ENCODE measurements at regions of chr2 and their contacts with region 1.

Region 1: DNA sequence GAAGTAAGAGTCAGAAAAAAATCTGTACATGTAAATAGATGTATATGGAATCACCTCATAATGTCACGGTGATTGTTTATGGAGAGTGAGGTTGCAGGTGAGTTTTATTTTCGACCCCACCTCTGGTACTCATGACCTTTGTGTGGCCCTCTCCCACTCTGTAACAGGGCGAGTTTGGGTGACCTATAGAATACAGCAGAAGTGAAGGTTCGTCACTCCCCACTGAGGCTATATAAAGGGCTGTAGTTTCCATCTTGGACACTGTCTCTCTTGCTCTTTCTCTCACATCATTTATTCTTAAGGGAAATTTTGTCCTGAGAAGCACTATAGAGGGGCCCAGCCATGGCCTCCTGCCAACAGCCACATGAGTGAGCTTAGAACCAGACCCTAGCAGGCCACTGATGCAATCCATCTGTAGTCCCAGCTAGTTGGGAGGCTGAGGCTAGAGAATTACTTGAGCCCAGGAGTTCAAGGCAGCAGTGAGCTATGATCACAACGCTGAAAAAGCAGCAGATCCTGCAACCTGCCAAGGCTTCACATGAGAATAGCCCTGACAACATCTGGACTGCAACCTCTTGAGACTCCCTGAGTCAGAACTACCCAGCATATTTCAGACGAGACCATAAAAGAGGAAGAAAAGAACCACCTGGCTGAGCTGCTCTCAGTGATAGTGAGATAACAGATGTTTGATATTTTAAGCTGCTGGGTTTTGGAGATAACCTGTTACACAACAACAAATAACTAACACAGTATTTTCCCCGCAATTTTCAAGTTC is 74.3 kb upstream of the SLC1A4 start:
- DNase-seq: no peak
- ATAC-seq: no peak
- H3K4me3 ChIP-seq: no peak overlapping the region
- H3K4me3 Mint-ChIP-seq: no peak overlapping the region
- H3K27ac ChIP-seq: no peak overlapping the region
- H3K27ac Mint-ChIP-seq: no peak overlapping the region
- H3K4me1 ChIP-seq: peaks cover 15% of the 10 kb centered on the region
- H3K4me1 Mint-ChIP-seq: peaks cover 19% of the 10 kb centered on the region
- H3K27me3 ChIP-seq: no peaks in the 10 kb centered on the region
- H3K27me3 Mint-ChIP-seq: no peaks in the 10 kb centered on the region
- CTCF ChIP-seq: no peak

Region 2: GRCh38 chr2:65031341-65032018 is 116.6 kb after region 1 on chr2:
- CTCF ChIA-PET with region 1: interaction called, 22 read pairs
- POLR2A ChIA-PET with region 1: interaction called, 5 read pairs
- intact Hi-C with region 1: no loop called
- DNase-seq: peak in 6 of 14 experiments; percentile 5 to 45 (median 32)
- ATAC-seq: peak; percentile 68
- H3K4me3 ChIP-seq: no peak overlapping the region
- H3K4me3 Mint-ChIP-seq: peak overlapping the region; percentile 66
- H3K27ac ChIP-seq: peak overlapping the region; percentile 40 to 61
- H3K27ac Mint-ChIP-seq: peak overlapping the region; percentile 74
- H3K4me1 ChIP-seq: peaks cover 28% of the 10 kb centered on the region
- H3K4me1 Mint-ChIP-seq: peaks cover 26% of the 10 kb centered on the region
- H3K27me3 ChIP-seq: no peaks in the 10 kb centered on the region
- H3K27me3 Mint-ChIP-seq: no peaks in the 10 kb centered on the region
- CTCF ChIP-seq: no peak

Region 3: GRCh38 chr2:65040400-65041261 is 125.7 kb after region 1 on chr2:
- CTCF ChIA-PET with region 1: interaction called, 28 read pairs
- POLR2A ChIA-PET with region 1: no interaction called
- intact Hi-C with region 1: loop called (anchors 1 kb)
- DNase-seq: peak; percentile 60 to 88 (median 69)
- ATAC-seq: peak; percentile 100
- H3K4me3 ChIP-seq: no peak overlapping the region
- H3K4me3 Mint-ChIP-seq: peak overlapping the region; percentile 34
- H3K27ac ChIP-seq: no peak overlapping the region
- H3K27ac Mint-ChIP-seq: no peak overlapping the region
- H3K4me1 ChIP-seq: peaks cover 5% of the 10 kb centered on the region
- H3K4me1 Mint-ChIP-seq: peaks cover 13% of the 10 kb centered on the region
- H3K27me3 ChIP-seq: no peaks in the 10 kb centered on the region
- H3K27me3 Mint-ChIP-seq: no peaks in the 10 kb centered on the region
- CTCF ChIP-seq: peak; percentile 95

Region 4: DNA sequence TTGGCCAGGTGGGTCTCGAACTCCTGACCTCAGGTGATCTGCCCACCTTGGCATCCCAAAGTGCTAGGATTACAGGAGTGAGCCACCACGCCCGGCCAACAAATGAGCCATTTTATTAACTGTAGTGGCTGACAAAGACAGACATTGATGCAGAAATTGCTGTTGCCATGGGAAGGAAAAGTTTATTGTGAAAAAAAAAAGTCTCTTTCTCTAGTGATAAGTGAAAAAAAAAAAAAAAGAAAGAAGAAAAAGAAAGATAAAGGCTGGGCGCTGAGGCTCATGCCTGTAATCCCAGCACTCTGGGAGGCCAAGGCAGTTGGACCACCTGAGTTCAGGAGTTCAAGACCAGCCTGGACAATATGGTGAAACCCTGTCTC is 254.8 kb after region 1 on chr2:
- CTCF ChIA-PET with region 1: interaction called, 5 read pairs
- POLR2A ChIA-PET with region 1: no interaction called
- intact Hi-C with region 1: loop called (anchors 1 to 2 kb)
- DNase-seq: no peak
- ATAC-seq: no peak
- H3K4me3 ChIP-seq: no peak overlapping the region
- H3K4me3 Mint-ChIP-seq: no peak overlapping the region
- H3K27ac ChIP-seq: no peak overlapping the region
- H3K27ac Mint-ChIP-seq: no peak overlapping the region
- H3K4me1 ChIP-seq: no peaks in the 10 kb centered on the region
- H3K4me1 Mint-ChIP-seq: no peaks in the 10 kb centered on the region
- H3K27me3 ChIP-seq: no peaks in the 10 kb centered on the region
- H3K27me3 Mint-ChIP-seq: no peaks in the 10 kb centered on the region
- CTCF ChIP-seq: no peak

Region 5: GRCh38 chr2:65186872-65187851 is 272.2 kb after region 1 on chr2:
- CTCF ChIA-PET with region 1: interaction called, 4 read pairs
- POLR2A ChIA-PET with region 1: no interaction called
- intact Hi-C with region 1: loop called (anchors 5 kb)
- DNase-seq: peak; percentile 43 to 78 (median 58)
- ATAC-seq: peak; percentile 96
- H3K4me3 ChIP-seq: no peak overlapping the region
- H3K4me3 Mint-ChIP-seq: no peak overlapping the region
- H3K27ac ChIP-seq: no peak overlapping the region
- H3K27ac Mint-ChIP-seq: no peak overlapping the region
- H3K4me1 ChIP-seq: peaks cover 5% of the 10 kb centered on the region
- H3K4me1 Mint-ChIP-seq: peaks cover 9% of the 10 kb centered on the region
- H3K27me3 ChIP-seq: peaks cover 3 to 4% of the 10 kb centered on the region in 2 experiments
- H3K27me3 Mint-ChIP-seq: peaks cover 29% of the 10 kb centered on the region
- CTCF ChIP-seq: peak; percentile 80

Region 6: DNA sequence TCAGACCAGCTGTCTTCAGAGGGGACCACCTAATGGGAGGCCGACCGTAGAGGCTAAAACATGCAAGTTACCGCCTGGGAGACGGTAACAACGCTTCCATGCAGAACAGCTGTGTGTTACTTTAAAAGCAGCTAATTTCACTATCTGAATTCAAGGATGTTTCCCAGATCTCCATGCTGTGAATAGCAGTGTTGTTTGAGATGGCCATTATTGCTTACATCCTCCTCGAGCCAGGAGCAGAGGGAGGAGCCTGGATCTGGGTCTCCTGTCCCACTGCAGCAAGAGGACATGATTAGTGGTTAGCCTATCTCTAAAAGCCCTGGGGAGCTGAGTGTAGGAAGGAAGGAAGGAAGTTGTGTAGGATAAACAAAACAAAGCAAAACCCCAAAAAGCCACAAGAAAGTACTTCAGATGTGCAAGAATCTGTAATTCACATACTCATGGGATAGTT is 363.6 kb after region 1 on chr2:
- CTCF ChIA-PET with region 1: no interaction called
- POLR2A ChIA-PET with region 1: no interaction called
- intact Hi-C with region 1: no loop called
- DNase-seq: no peak
- ATAC-seq: no peak
- H3K4me3 ChIP-seq: no peak overlapping the region
- H3K4me3 Mint-ChIP-seq: no peak overlapping the region
- H3K27ac ChIP-seq: no peak overlapping the region
- H3K27ac Mint-ChIP-seq: no peak overlapping the region
- H3K4me1 ChIP-seq: peaks cover 13% of the 10 kb centered on the region
- H3K4me1 Mint-ChIP-seq: peaks cover 18% of the 10 kb centered on the region
- H3K27me3 ChIP-seq: no peaks in the 10 kb centered on the region
- H3K27me3 Mint-ChIP-seq: no peaks in the 10 kb centered on the region
- CTCF ChIP-seq: no peak

Region 7: DNA sequence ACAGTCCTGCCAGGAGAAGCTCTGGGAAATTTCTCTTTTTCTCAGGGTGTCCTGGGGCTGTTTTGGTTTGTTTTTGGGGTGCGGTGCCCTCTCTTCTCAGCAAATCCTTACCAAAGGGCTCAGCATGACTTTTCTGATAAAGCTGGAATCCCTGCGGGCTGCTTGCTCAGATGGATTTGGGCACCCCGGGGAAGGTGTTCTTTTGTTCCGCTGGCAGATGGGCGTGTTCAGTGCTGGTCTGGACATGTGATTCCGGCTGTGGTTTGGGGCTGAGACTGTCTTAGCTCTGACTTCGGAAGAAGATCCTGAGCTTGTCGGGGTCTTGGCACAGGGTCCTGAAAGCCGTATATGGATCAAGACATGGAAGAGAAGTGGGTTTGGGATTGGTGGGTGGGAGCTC is 651.7 kb after region 1 on chr2:
- CTCF ChIA-PET with region 1: no interaction called
- POLR2A ChIA-PET with region 1: no interaction called
- intact Hi-C with region 1: no loop called
- DNase-seq: peak in 1 of 14 experiments; percentile 8
- ATAC-seq: no peak
- H3K4me3 ChIP-seq: no peak overlapping the region
- H3K4me3 Mint-ChIP-seq: no peak overlapping the region
- H3K27ac ChIP-seq: no peak overlapping the region
- H3K27ac Mint-ChIP-seq: no peak overlapping the region
- H3K4me1 ChIP-seq: no peaks in the 10 kb centered on the region
- H3K4me1 Mint-ChIP-seq: no peaks in the 10 kb centered on the region
- H3K27me3 ChIP-seq: no peaks in the 10 kb centered on the region
- H3K27me3 Mint-ChIP-seq: peaks cover 5% of the 10 kb centered on the region
- CTCF ChIP-seq: no peak

Region 8: GRCh38 chr2:65576861-65577601 is 662.1 kb after region 1 on chr2:
- CTCF ChIA-PET with region 1: interaction called, 6 read pairs
- POLR2A ChIA-PET with region 1: no interaction called
- intact Hi-C with region 1: loop called (anchors 1 to 2 kb)
- DNase-seq: no peak
- ATAC-seq: no peak
- H3K4me3 ChIP-seq: no peak overlapping the region
- H3K4me3 Mint-ChIP-seq: no peak overlapping the region
- H3K27ac ChIP-seq: no peak overlapping the region
- H3K27ac Mint-ChIP-seq: no peak overlapping the region
- H3K4me1 ChIP-seq: no peaks in the 10 kb centered on the region
- H3K4me1 Mint-ChIP-seq: no peaks in the 10 kb centered on the region
- H3K27me3 ChIP-seq: no peaks in the 10 kb centered on the region
- H3K27me3 Mint-ChIP-seq: peaks cover 18% of the 10 kb centered on the region
- CTCF ChIP-seq: no peak